Activated T-helper 2 cell treated with anti-CD3 and anti-CD28 coated beads, Interferon-gamma antibody, Interleukin-2, Interleukin-4, amounts not matched to agents 10 μg/mL and 5 μg/mL and 100 μg/mL, durations not matched to agents 14 hours and 24 hours and 36 hours (primary cell): ENCODE measurements at regions of chr6 and their contacts with region 1.

Region 1: GRCh38 chr6:90274451-90275030 is 22.1 kb downstream of the BACH2 start:
- DNase-seq: peak; percentile 78
- H3K4me3 Mint-ChIP-seq: peak overlapping the region; percentile 72
- H3K27ac Mint-ChIP-seq: peak overlapping the region; percentile 97
- H3K4me1 Mint-ChIP-seq: peaks cover 84% of the 10 kb centered on the region
- H3K27me3 Mint-ChIP-seq: no peaks in the 10 kb centered on the region

Region 2: GRCh38 chr6:89352278-89353117 is 922.0 kb before region 1 on chr6 and contains the start of gene UBE2J1:
- intact Hi-C with region 1: no loop called
- DNase-seq: peak; percentile 74
- H3K4me3 Mint-ChIP-seq: peak within 1 kb of the TSS; percentile 96
- H3K27ac Mint-ChIP-seq: peak within 1 kb of the TSS; percentile 92
- H3K4me1 Mint-ChIP-seq: peaks cover 66% of the 10 kb centered on the region
- H3K27me3 Mint-ChIP-seq: no peaks in the 10 kb centered on the region
- total RNA-seq, gene UBE2J1: 34.4 and 34.8 TPM in 2 replicates

Region 3: DNA sequence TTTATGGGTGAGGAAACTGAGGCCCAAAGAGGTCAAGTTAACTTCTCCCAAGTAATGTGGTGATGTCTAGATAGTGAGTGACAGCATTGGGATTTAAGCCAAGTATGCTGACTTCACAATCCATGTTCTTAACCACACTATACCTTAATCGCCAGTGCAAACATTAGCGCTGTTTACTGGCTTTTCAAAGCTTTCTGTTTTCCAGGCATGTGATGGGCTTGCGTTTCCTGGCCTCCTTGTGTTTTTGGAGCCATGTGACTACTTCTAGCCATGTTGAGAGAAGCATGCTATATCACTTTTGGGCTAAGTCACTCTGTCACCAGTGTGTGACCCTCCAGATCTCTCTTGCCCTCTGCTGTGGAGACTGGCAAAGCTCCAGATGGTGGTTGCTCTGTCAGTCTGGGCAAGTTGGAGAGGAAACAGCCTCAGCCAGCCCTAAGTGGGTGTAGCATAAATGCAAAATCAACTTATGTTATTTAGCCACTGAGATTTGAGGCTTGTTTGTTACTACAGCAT is 764.7 kb before region 1 on chr6:
- intact Hi-C with region 1: no loop called
- DNase-seq: no peak
- H3K4me3 Mint-ChIP-seq: no peak overlapping the region
- H3K27ac Mint-ChIP-seq: no peak overlapping the region
- H3K4me1 Mint-ChIP-seq: no peaks in the 10 kb centered on the region
- H3K27me3 Mint-ChIP-seq: peaks cover 7% of the 10 kb centered on the region

Region 4: DNA sequence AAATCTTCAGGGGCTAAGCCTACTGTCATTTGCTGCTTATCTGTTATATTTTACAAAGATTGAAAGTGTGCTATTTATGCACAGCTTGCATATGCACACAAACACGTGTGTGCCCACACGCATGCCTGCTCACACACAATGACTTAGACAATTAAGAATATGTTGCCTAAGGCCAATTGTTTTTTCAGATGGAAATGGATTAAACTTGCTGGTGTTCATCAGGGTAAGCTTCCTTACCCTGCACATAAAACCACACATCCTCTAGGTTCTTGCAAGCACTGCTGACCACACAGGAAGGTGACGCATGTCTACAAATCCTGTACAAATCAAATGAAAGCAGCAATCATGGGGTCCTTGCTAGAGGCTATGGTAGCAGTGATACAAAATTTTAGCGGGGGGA is 321.9 kb before region 1 on chr6:
- intact Hi-C with region 1: loop called (anchors 1 kb)
- DNase-seq: peak; percentile 53
- H3K4me3 Mint-ChIP-seq: peak overlapping the region; percentile 49
- H3K27ac Mint-ChIP-seq: peak overlapping the region; percentile 76
- H3K4me1 Mint-ChIP-seq: peaks cover 67% of the 10 kb centered on the region
- H3K27me3 Mint-ChIP-seq: no peaks in the 10 kb centered on the region

Region 5: GRCh38 chr6:90179190-90180169 is 95.1 kb before region 1 on chr6:
- intact Hi-C with region 1: loop called (anchors 2 kb)
- DNase-seq: no peak
- H3K4me3 Mint-ChIP-seq: no peak overlapping the region
- H3K27ac Mint-ChIP-seq: no peak overlapping the region
- H3K4me1 Mint-ChIP-seq: peaks cover 67% of the 10 kb centered on the region
- H3K27me3 Mint-ChIP-seq: no peaks in the 10 kb centered on the region

Region 6: GRCh38 chr6:90230548-90231215 is 43.9 kb before region 1 on chr6:
- intact Hi-C with region 1: loop called (anchors 1 kb)
- DNase-seq: no peak
- H3K4me3 Mint-ChIP-seq: peak overlapping the region; percentile 7
- H3K27ac Mint-ChIP-seq: peak overlapping the region; percentile 33
- H3K4me1 Mint-ChIP-seq: peaks cover 81% of the 10 kb centered on the region
- H3K27me3 Mint-ChIP-seq: no peaks in the 10 kb centered on the region

Region 7: DNA sequence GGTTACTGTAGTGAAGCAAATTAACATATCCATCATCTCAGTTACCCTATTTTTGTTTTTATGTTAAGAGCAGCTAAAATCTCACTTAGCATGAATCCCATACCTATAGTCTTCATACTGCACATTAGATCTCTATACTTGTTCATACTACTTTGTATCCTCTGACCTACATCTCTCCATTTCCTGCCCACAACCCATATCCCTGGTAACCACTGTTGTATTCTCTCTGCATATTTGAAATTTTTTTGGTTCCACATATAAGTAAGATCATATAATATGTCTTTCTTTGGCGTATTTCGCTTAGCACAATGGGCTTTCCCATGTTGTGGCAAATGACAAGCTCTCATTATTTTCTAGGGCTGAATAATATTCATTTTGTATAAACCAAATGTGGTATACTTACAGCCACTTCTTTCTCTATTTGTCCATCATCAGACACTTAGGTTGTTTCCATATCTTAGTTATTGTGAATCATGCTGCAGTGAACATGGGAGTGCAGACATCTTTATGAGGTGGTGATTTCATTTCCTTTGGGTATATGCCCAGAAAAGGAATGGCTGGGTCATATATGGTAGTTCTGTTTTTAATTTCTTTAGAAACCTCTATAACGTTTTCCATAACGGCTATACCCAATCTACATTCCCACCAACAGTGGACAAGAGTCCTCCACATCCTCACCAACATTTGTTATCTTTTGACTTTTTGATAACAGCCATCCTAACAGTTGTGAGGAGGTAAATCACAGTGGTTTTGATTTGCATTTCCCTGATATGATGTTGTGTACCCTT is 17.6 kb before region 1 on chr6:
- intact Hi-C with region 1: loop called (anchors 1 kb)
- DNase-seq: no peak
- H3K4me3 Mint-ChIP-seq: no peak overlapping the region
- H3K27ac Mint-ChIP-seq: peak overlapping the region; percentile 90
- H3K4me1 Mint-ChIP-seq: peaks cover 69% of the 10 kb centered on the region
- H3K27me3 Mint-ChIP-seq: no peaks in the 10 kb centered on the region

Region 8: DNA sequence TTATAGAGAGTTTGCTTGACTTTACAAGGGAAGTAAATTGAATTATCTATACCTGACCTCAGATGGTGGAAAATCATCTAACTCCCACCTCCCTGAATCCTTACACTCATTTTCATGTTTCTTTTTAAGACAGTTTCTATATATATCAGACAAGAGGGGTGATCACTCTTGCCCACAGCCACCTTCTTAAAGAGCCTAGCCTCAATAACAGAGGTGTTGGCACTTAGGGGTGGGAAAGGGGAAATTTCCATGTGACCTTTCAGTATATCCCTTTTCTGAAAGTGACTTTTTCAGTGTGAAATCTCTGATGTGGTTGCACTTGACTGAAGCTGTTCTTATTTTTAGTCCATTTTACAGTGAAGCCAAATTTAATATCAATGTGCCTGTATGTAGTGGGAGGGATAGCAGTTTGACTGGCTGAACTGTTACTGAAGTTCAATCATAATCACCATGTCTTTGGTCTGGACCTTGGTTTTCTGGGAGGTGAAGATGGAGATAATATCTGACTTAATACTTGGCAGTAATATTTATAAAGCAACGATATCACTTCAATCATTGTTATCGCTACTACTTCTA is 171.1 kb after region 1 on chr6:
- intact Hi-C with region 1: loop called (anchors 1 kb)
- DNase-seq: no peak
- H3K4me3 Mint-ChIP-seq: no peak overlapping the region
- H3K27ac Mint-ChIP-seq: peak overlapping the region; percentile 97
- H3K4me1 Mint-ChIP-seq: peaks cover 56% of the 10 kb centered on the region
- H3K27me3 Mint-ChIP-seq: no peaks in the 10 kb centered on the region